PC-9 (cell line): ENCODE measurements at regions of chr17 and their contacts with region 1.

Region 1: DNA sequence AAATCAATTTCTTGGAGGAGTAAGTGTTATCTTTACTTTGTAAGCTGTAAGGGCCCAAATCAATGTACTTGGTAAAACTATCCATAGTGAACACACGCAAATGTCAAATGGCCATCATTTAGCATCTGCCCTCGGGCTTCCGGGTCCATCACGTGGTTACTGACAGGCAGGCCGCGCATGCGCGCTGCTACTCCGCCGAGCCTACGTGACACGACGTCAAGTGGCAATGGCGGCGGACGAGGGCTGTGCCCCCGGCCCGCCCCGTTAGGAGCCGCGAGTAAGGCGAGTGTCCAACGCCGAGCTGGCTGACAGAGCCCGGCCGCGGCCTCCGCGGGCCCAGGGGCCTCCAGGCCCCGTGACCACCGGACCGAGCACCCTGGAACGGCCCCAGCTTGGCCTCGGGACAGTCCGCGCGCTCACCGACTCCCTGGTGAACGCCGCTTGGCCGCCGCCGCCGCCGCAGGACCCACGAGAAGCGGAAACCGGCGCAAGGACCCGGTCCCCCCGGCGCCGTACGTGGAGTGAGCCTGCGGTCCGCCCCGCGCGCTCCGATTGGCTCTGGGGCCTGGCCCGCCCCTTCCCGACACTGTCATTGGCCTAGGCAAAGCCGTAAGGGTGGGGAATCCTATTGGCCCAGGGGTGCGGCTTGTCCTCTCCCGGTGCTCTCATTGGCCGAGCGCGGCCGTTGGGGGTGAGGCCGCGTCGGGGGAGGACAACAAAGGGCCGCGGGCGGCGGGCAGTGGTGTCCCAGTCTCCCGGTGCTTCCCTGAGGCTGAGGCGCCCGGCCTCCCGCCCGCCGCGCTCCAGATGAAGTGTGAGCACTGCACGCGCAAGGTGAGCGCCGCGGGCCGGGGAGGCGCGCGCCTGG is at the start of gene NARF:
- DNase-seq: peak; percentile 90 to 95
- H3K4me3 ChIP-seq: peak within 1 kb of the TSS; percentile 71
- H3K27ac ChIP-seq: peak within 1 kb of the TSS; percentile 95
- H3K4me1 ChIP-seq: peaks cover 25% of the 10 kb centered on the region
- H3K27me3 ChIP-seq: no peaks in the 10 kb centered on the region
- CTCF ChIP-seq: no peak
- total RNA-seq, gene NARF: 57.2 and 58.0 TPM in 2 replicates

Region 2: GRCh38 chr17:82518826-82519810 is 60.9 kb after region 1 on chr17 and contains the start of gene FOXK2:
- CTCF ChIA-PET with region 1: interaction called, 7 read pairs
- POLR2A ChIA-PET with region 1: interaction called, 11 read pairs
- intact Hi-C with region 1: no loop called
- DNase-seq: peak; percentile 78 to 96
- H3K4me3 ChIP-seq: peak within 1 kb of the TSS; percentile 79
- H3K27ac ChIP-seq: peak within 1 kb of the TSS; percentile 84
- H3K4me1 ChIP-seq: peaks cover 18% of the 10 kb centered on the region
- H3K27me3 ChIP-seq: no peaks in the 10 kb centered on the region
- CTCF ChIP-seq: no peak
- total RNA-seq, gene FOXK2: 70.5 and 78.9 TPM in 2 replicates